ENCODE measurements at regions of chr6 and their contacts with region 1.

Region 1: GRCh38 chr6:99746261-99746895 is 139.7 kb downstream of the PRDM13 start:
- DNase-seq: peak; percentile 48 to 86 (median 63)
- H3K4me3 ChIP-seq: no peak overlapping the region
- H3K27ac ChIP-seq: no peak overlapping the region
- H3K4me1 ChIP-seq: no peaks in the 10 kb centered on the region
- H3K27me3 ChIP-seq: peaks cover 6% of the 10 kb centered on the region
- CTCF ChIP-seq: peak; percentile 85 to 94 (median 88)
- POLR2A ChIP-seq: no peak

Region 2: DNA sequence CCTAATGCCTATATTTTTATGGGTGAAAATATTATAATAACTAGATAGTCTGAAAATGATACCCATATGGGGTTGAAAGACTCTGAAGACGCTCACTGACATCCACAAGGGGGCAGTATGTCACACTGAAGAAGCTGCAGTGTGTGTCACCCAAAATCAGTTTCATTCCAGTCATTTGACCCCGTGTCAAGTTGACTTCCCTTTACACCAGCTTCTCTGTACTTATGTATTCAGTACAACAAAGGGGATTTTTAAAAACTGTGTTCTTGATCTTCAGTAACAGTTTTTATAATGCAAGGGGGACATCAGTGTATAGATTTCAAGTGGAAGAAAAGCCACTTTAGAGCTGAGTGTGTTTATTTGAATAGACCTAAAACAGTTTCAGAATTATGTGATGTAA is 416.2 kb before region 1 on chr6:
- intact Hi-C with region 1: loop called in 1 of 2 experiments (anchors 10 kb)
- DNase-seq: peak; percentile 47 to 84 (median 66)
- H3K4me3 ChIP-seq: no peak overlapping the region
- H3K27ac ChIP-seq: no peak overlapping the region
- H3K4me1 ChIP-seq: no peaks in the 10 kb centered on the region
- H3K27me3 ChIP-seq: no peaks in the 10 kb centered on the region
- CTCF ChIP-seq: peak; percentile 44 to 80 (median 64)
- POLR2A ChIP-seq: no peak

Region 3: DNA sequence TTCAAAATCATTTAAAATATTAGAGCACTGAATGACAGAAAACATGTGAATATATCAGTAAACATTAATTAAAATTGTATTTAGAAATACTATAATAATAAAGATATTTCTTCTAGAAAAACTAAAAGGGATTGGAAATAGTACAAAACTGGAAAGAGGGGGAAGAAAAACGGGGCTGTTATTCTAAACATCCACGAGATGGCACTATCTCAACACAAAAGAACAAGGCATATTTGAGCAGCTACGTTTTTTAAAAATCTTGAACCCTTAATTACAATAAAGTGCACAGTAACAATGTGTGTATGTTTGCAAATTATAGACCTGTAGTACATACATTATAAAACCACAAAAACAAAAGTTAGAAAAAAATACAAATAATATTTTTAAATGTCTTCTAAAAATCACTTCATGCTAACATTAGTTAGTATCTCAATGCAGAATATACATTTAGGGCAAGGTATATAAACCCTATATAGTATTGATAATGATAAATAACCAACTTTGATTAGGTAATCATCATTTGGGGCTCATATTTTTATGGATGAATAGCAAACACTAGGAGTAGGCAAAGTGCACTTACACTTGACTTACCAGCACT is 278.8 kb before region 1 on chr6:
- intact Hi-C with region 1: loop called (anchors 5 to 10 kb)
- DNase-seq: no peak
- H3K4me3 ChIP-seq: no peak overlapping the region
- H3K27ac ChIP-seq: no peak overlapping the region
- H3K4me1 ChIP-seq: no peaks in the 10 kb centered on the region
- H3K27me3 ChIP-seq: no peaks in the 10 kb centered on the region
- CTCF ChIP-seq: peak; percentile 34 to 77 (median 62)
- POLR2A ChIP-seq: no peak

Region 4: DNA sequence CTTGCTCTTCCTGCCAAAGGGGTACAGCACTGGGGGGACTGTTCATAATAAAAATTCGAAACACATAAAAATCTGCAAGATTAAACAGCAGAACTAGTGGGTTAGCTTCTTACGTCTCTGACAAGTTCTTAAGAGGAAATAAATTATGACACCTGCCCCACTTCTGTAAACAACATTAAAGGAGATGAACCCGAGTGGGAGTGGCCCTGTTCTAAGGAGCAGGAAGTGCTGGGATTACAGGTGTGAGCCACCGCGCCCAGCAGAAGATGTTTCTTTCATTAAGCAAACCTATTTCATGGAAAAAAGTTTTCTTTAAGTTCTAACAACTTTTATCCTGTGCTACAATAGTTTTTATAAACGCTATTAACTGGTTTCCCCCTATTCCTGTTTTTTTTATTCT is 255.8 kb before region 1 on chr6:
- intact Hi-C with region 1: no loop called
- DNase-seq: no peak
- H3K4me3 ChIP-seq: no peak overlapping the region
- H3K27ac ChIP-seq: no peak overlapping the region
- H3K4me1 ChIP-seq: no peaks in the 10 kb centered on the region
- H3K27me3 ChIP-seq: no peaks in the 10 kb centered on the region
- CTCF ChIP-seq: no peak
- POLR2A ChIP-seq: no peak

Region 5: GRCh38 chr6:99879431-99879830 is 133.1 kb after region 1 on chr6:
- intact Hi-C with region 1: no loop called
- DNase-seq: no peak
- H3K4me3 ChIP-seq: no peak overlapping the region
- H3K27ac ChIP-seq: no peak overlapping the region
- H3K4me1 ChIP-seq: no peaks in the 10 kb centered on the region
- H3K27me3 ChIP-seq: no peaks in the 10 kb centered on the region
- CTCF ChIP-seq: no peak
- POLR2A ChIP-seq: no peak

Region 6: DNA sequence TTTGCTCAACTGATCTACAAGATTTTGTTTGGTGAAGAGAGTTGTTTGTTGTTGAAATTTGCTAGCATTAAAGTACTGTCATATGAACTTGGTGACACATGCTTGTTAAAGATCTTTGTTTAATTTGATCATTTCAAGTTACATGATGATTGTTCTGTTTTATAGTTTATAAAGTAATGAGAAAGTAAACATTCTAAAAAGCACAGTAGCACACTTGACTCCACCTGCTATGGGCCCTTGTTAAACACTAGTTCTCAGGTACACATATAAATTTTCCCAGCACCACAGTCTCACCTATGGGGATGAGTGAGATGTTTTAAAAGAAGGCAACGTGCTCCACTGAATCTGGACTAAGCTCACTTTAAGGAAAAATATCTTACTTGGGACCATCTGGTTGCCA is 233.6 kb after region 1 on chr6:
- intact Hi-C with region 1: no loop called
- DNase-seq: no peak
- H3K4me3 ChIP-seq: no peak overlapping the region
- H3K27ac ChIP-seq: no peak overlapping the region
- H3K4me1 ChIP-seq: no peaks in the 10 kb centered on the region
- H3K27me3 ChIP-seq: no peaks in the 10 kb centered on the region
- CTCF ChIP-seq: no peak
- POLR2A ChIP-seq: no peak